ENCODE measurements at regions of chr1 and their contacts with region 1.

Region 1: DNA sequence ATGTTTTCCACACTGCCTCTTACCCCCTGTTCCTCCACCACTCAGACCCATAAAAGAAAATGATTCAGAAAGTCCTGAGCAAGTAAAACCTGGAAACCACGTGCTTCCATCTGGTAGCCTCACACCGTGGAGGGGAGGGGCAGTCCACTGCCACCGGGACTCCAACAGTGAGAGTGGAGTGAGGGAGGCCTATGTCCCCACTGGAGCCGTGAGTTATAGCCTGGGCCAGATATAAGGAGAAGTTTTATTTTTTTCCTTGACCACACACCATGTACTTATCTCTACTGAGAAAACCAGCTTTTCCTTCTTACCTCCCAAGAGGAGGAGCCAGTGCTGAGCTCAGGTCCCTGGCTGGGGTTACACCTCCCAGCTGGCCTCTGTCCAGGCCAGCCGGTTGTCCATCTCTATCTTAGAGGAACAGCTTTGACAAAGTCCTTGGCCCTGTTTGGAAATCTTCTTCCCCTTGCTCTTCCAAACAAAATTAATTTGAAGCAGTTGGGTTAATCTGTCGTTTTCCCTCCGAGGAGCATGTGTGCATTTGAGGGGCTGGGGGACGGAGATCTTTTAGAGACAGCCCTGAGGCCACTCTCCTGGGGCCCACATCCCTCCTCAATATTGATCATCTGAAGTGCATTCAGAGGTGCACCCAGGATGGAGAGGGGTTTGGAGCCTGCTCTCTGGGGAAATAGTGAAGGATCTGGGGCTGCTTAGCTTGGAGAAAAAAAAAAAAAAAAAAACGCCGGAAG is 49.1 kb upstream of the SERBP1 start:
- DNase-seq: peak; percentile 37 to 79 (median 65)
- H3K4me3 ChIP-seq: peak overlapping the region in 2 of 7 experiments; percentile 20 to 25
- H3K27ac ChIP-seq: no peak overlapping the region
- H3K4me1 ChIP-seq: peaks cover 0 to 15% (median 9%) of the 10 kb centered on the region in 4 experiments
- H3K27me3 ChIP-seq: no peaks in the 10 kb centered on the region

Region 2: GRCh38 chr1:67294836-67295617 is 184.3 kb before region 1 on chr1:
- CTCF ChIA-PET with region 1: no interaction called
- POLR2A ChIA-PET with region 1: no interaction called
- DNase-seq: no peak
- H3K4me3 ChIP-seq: no peak overlapping the region
- H3K27ac ChIP-seq: no peak overlapping the region
- H3K4me1 ChIP-seq: peaks cover 0 to 1% (median 0%) of the 10 kb centered on the region in 4 experiments
- H3K27me3 ChIP-seq: no peaks in the 10 kb centered on the region

Region 3: DNA sequence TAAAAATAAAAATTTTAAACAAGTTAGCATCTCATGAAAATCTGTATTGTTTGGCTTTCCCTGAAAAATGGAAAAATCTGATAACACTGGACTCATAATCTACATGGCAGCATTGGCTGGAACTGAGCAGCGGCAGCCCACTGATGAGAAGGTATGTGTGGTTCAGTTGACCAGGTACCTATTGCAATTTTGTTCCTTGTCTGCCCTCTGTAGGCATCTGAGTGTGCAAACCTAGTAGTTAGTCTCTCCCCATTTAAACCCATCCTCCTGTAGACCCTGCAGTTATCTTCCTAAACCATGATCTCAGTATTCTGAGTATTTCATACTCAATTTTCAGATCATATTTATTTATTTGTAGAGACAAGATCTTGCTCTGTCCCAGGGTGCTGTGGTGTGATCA is 10.3 kb after region 1 on chr1:
- CTCF ChIA-PET with region 1: interaction called, 13 read pairs
- POLR2A ChIA-PET with region 1: interaction called, 3 read pairs
- DNase-seq: peak; percentile 53 to 70 (median 69)
- H3K4me3 ChIP-seq: no peak overlapping the region
- H3K27ac ChIP-seq: no peak overlapping the region
- H3K4me1 ChIP-seq: no peaks in the 10 kb centered on the region
- H3K27me3 ChIP-seq: no peaks in the 10 kb centered on the region

Measured in common myeloid progenitor, CD34-positive (primary cell).